ENCODE measurements at regions of chr7 and their contacts with region 1.

Region 1: DNA sequence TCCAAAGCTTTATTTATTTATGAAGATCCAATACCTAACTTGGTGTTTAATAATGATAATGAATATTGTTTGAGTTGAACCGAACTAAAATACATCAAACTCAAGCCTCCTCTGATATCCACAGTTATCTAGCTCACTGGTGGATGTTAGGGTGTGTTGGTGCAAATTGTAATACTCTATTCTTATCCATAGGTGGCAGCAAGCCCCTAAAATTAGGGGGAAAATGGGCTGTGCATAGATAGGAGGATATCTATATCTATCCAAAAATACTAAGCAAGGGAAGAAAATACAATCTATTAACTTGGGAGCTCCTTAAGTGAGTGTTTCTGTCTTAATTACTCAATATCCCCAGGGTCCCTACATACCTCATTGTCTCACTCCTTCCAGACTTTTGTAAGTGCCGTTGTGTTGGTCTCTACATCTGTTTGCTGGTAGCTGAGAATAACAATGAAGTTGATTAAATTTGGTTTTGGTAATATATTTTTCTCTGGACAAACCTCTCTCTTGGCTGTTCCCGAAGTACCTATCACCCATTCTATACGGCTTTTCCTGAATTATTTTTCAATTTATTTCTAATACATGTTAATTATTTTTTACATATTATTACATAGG is 55.0 kb upstream of the VWDE start:
- DNase-seq: peak; percentile 32 to 64 (median 57)
- H3K4me3 ChIP-seq: no peak overlapping the region
- H3K27ac ChIP-seq: no peak overlapping the region
- H3K4me1 ChIP-seq: no peaks in the 10 kb centered on the region
- H3K27me3 ChIP-seq: no peaks in the 10 kb centered on the region

Region 2: GRCh38 chr7:12436896-12437535 is 21.6 kb before region 1 on chr7:
- CTCF ChIA-PET with region 1: interaction called, 15 read pairs
- POLR2A ChIA-PET with region 1: no interaction called
- DNase-seq: peak; percentile 32 to 79 (median 67)
- H3K4me3 ChIP-seq: no peak overlapping the region
- H3K27ac ChIP-seq: no peak overlapping the region
- H3K4me1 ChIP-seq: no peaks in the 10 kb centered on the region
- H3K27me3 ChIP-seq: no peaks in the 10 kb centered on the region

Region 3: DNA sequence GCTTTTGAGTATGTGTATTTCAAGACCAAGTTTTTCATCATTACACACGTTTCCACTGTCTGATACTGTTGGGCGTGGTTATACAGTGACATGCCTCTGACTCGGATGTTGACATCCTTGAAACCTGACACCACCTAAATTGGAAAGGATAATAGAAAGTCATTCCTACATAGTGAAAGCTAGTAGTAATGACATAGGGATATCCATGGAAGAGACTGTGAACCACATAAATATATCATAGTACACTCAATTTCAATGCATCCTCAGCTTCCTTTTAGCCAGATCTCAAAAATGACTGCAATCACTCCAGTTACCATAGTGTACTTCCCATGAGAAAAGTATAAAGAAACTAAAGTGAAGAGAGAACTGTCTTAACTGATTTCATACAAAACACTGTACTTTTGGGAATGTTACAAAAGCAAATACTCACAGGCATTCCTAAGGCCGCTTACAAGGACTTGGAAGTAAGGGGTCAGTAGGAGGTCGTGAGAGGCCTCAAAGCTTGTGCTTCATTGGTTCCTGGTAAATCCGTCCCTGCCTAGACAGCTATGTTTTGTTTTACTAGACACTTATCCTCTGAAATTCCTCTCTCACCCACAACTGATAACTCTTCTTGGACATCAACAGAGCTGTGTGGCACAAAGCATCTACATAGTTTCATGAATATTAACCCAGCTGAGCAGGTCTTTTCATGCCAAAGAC is 16.9 kb after region 1 on chr7:
- CTCF ChIA-PET with region 1: interaction called, 11 read pairs
- POLR2A ChIA-PET with region 1: no interaction called
- DNase-seq: no peak
- H3K4me3 ChIP-seq: no peak overlapping the region
- H3K27ac ChIP-seq: no peak overlapping the region
- H3K4me1 ChIP-seq: no peaks in the 10 kb centered on the region
- H3K27me3 ChIP-seq: no peaks in the 10 kb centered on the region

Region 4: GRCh38 chr7:12481722-12482121 is 23.1 kb after region 1 on chr7:
- CTCF ChIA-PET with region 1: interaction called, 15 read pairs
- POLR2A ChIA-PET with region 1: no interaction called
- DNase-seq: peak in 1 of 3 donors; percentile 17
- H3K4me3 ChIP-seq: no peak overlapping the region
- H3K27ac ChIP-seq: no peak overlapping the region
- H3K4me1 ChIP-seq: no peaks in the 10 kb centered on the region
- H3K27me3 ChIP-seq: no peaks in the 10 kb centered on the region

Region 5: GRCh38 chr7:12490117-12490688 is 31.6 kb after region 1 on chr7:
- CTCF ChIA-PET with region 1: interaction called, 42 read pairs
- POLR2A ChIA-PET with region 1: no interaction called
- DNase-seq: peak; percentile 26 to 61 (median 57)
- H3K4me3 ChIP-seq: no peak overlapping the region
- H3K27ac ChIP-seq: no peak overlapping the region
- H3K4me1 ChIP-seq: no peaks in the 10 kb centered on the region
- H3K27me3 ChIP-seq: no peaks in the 10 kb centered on the region

Region 6: DNA sequence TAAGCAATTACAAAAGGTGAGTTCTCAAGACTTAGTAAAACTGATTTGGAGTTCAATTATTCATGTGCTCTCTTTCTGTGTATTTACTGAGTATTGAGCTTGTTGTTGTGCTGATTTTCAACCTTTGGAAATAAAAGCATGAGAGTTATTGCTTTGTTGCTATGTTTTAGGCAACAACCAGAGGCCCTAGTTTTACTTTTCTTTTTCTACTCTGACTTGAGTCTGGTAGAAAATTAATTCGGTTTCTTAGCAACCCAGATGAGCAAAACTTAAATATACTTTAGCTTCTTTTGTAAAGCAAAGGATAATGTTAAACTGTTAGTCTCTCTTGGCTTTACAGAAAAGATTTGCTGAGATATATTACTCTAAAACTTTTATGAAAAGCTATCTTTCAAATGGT is 45.5 kb after region 1 on chr7:
- CTCF ChIA-PET with region 1: no interaction called
- POLR2A ChIA-PET with region 1: no interaction called
- DNase-seq: no peak
- H3K4me3 ChIP-seq: no peak overlapping the region
- H3K27ac ChIP-seq: no peak overlapping the region
- H3K4me1 ChIP-seq: no peaks in the 10 kb centered on the region
- H3K27me3 ChIP-seq: no peaks in the 10 kb centered on the region

Measured in common myeloid progenitor, CD34-positive (primary cell).